K562 (cell line): ENCODE measurements at regions of chr5 and their contacts with region 1.

Region 1: DNA sequence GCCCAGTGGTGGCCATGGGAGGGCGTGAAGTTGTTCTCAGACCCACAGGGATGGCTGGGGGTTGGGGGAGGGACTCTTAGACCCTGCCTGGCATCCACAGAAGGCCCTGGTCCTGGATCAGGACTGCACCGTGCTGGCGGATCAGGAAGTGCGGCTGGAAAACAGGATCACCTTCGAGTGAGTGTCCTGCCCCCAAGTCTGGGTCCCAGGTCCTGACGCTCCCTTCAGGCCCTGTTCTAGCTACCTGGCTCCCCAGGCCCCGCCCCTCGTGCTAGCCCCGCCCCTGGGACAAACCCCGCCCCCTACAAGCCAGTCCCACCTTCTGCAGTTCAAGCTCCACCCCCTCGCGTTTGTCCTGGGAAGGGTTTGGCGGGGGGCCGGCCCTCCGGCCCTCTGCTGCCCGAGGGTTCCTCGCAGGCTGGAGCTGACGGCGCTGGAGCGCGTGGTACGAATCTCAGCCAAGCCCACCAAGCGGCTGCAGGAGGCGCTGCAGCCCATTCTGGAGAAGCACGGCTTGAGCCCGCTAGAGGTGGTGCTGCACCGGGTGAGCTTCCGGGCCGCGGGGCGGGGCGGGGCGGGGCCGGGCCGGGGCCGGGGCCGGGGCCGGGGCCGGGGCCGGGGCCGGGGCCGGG is 12.9 kb downstream of the RGS14 start:
- DNase-seq: peak; percentile 89 to 97 (median 92)
- ATAC-seq: peak; percentile 83
- H3K4me3 ChIP-seq: peak overlapping the region; percentile 45
- H3K27ac ChIP-seq: peak overlapping the region; percentile 32; the same call in 2 of the 3 replicates
- H3K4me1 ChIP-seq: peaks cover 46 to 63% of the 10 kb centered on the region in 2 experiments
- H3K27me3 ChIP-seq: no peaks in the 10 kb centered on the region
- CTCF ChIP-seq: peak; percentile 61 to 99 (median 97)
- EP300 ChIP-seq: peak; percentile 7; the same call in 1 of the 2 replicates
- POLR2A ChIP-seq: no peak
- RAD21 ChIP-seq: peak; percentile 56 to 69

Region 2: GRCh38 chr5:177232761-177233160 is 137.8 kb before region 1 on chr5:
- CTCF ChIA-PET with region 1: no interaction called
- POLR2A ChIA-PET with region 1: no interaction called
- in situ Hi-C with region 1: no loop called
- intact Hi-C with region 1: no loop called
- DNase-seq: no peak
- ATAC-seq: peak; percentile 39
- H3K4me3 ChIP-seq: no peak overlapping the region
- H3K27ac ChIP-seq: no peak overlapping the region
- H3K4me1 ChIP-seq: peaks cover 0 to 5% of the 10 kb centered on the region in 2 experiments; a peak in 2 of 5 replicates
- H3K27me3 ChIP-seq: no peaks in the 10 kb centered on the region
- CTCF ChIP-seq: no peak
- EP300 ChIP-seq: no peak
- POLR2A ChIP-seq: no peak
- RAD21 ChIP-seq: no peak

Region 3: GRCh38 chr5:177317959-177318377 is 52.6 kb before region 1 on chr5:
- CTCF ChIA-PET with region 1: interaction called, 6 read pairs
- POLR2A ChIA-PET with region 1: interaction called, 7 read pairs
- in situ Hi-C with region 1: no loop called
- intact Hi-C with region 1: loop called (anchors 1 kb)
- DNase-seq: peak; percentile 60 to 85 (median 70)
- ATAC-seq: peak; percentile 78
- H3K4me3 ChIP-seq: no peak overlapping the region
- H3K27ac ChIP-seq: no peak overlapping the region
- H3K4me1 ChIP-seq: peaks cover 4 to 33% of the 10 kb centered on the region in 2 experiments
- H3K27me3 ChIP-seq: no peaks in the 10 kb centered on the region
- CTCF ChIP-seq: peak; percentile 87 to 98 (median 94)
- EP300 ChIP-seq: no peak
- POLR2A ChIP-seq: no peak
- RAD21 ChIP-seq: peak; percentile 70 to 87